PC-3 (cell line): ENCODE measurements at regions of chr15 and their contacts with region 1.

Region 1: DNA sequence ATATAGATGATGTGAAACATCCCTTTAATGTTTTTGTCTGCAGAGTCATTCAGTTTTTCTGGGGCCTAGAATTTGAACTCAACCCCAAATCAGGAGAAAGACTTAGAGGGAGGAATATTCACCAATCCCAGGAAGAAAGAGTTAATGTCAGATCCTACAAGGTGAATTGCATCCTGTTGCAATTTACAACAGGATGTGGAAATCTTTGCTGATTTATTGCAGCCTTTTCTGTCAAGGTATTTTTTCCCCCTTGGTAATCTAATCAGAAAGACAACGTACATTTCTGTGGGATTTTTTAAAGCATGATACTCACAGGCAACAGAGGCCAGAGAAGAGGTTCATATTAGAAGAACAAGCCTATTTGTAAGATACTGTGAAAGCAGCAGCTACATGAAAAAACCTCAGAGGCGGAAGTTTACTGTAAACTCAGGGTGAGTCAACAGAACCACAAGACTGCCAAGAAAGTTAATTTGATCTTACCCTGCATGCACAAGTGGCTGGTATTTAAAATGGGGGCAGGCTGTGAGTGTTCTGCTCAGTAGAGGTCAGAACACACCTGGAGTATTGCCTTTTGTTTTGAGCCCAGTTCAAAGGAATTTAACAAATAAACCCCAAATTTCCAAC is 531.9 kb downstream of the AGBL1 start:
- DNase-seq: peak; percentile 67
- ATAC-seq: no peak
- H3K4me3 ChIP-seq: no peak overlapping the region
- H3K27ac ChIP-seq: no peak overlapping the region
- H3K4me1 ChIP-seq: 0 out of 2 replicates have a peak, but pooled peaks cover 7% of the 10 kb centered on the region
- H3K27me3 ChIP-seq: no peaks in the 10 kb centered on the region
- CTCF ChIP-seq: no peak

Region 2: GRCh38 chr15:88011533-88011932 is 1400.0 kb after region 1 on chr15:
- CTCF ChIA-PET with region 1: no interaction called
- POLR2A ChIA-PET with region 1: interaction called, 16 read pairs
- intact Hi-C with region 1: no loop called
- DNase-seq: no peak
- ATAC-seq: no peak
- H3K4me3 ChIP-seq: no peak overlapping the region
- H3K27ac ChIP-seq: no peak overlapping the region
- H3K4me1 ChIP-seq: no peaks in the 10 kb centered on the region
- H3K27me3 ChIP-seq: no peaks in the 10 kb centered on the region
- CTCF ChIP-seq: no peak